Dorsolateral prefrontal cortex (tissue), 120 donors: ENCODE measurements at regions of chr6 and their contacts with region 1.

Region 1: DNA sequence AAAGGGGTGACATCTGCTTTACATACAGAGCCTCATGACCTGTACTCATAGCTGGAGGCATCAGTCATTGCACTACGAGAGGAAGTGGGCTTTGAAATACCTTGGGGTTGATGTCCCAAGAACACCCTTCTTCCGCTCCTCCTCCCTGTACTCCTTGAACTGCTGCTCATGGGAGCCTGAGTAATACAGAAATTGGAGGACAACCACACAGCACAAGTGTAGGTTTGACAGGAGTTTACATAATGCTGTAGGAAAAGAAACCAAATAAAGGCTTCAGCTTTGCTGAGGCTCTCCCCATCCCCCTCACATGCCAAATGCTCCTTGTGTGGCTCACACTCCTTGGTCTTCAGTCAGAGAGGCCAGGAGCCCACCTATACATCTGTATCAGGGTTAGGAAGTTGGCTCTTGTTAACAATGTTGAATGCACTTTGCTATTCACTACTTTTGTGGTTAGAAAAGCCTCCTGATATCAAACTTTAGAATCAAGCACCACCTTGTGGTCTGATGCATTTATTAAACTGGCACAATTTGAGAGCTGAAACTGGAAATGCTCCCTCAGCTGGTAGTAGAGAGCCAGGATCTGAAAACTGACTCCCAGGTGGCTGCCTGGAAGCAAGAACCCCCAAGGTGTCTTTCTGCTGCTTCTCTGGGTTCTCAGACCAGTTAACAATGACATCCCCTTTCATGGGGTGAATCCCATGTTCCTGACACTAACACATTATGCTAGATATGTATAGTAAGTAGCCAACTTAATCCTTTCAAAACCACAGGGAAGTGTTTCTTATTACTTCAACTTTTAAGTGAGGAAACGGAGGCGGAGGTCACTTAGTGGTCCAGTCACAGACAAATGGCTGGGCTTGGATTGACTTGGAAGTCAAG is 56.2 kb upstream of the EDN1 start:
- DNase-seq: peak in 4 of 10 donors; percentile 16 to 51 (median 36)
- H3K4me3 ChIP-seq: peak overlapping the region in 2 of 59 donors; percentile 9 to 17
- H3K27ac ChIP-seq: peak overlapping the region in 36 of 59 donors; percentile 0 to 76 (median 46)
- H3K27me3 ChIP-seq: no peaks in the 10 kb centered on the region
- CTCF ChIP-seq: peak; percentile 77 to 99 (median 92)

Region 2: DNA sequence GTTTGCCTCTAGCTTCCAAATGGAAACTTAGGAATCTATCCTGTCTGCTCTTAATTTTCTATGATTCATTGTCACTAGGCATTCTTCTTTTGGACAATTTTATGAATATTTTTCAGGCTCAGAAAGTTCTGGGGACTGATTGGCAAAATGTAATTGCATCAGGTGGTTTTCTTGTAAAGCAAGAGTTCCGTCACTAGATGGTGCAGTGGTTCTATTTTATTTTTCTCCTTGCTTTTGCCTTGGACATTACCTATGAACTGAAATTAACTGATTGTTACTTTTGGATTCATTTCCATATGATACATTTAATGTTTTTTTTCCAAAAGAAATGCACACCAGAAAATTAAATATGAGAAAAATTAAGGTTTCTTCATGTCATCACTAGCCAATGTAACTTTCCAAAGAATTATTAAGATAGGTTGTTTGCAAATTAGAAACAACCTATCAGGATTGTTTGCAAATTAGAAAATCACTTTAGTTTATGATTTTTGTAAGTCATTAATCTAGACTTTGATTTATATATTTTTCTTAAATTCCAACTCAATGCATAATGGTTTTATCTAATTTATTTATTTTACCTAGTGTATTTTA is 648.4 kb before region 1 on chr6:
- intact Hi-C with region 1: loop called (anchors 5 to 10 kb)
- DNase-seq: no peak
- H3K4me3 ChIP-seq: no peak overlapping the region
- H3K27ac ChIP-seq: no peak overlapping the region
- H3K27me3 ChIP-seq: no peaks in the 10 kb centered on the region
- CTCF ChIP-seq: peak; percentile 49 to 85 (median 68)

Region 3: GRCh38 chr6:11653028-11653583 is 580.8 kb before region 1 on chr6:
- intact Hi-C with region 1: loop called (anchors 1 to 5 kb)
- DNase-seq: peak in 1 of 10 donors; percentile 11
- H3K4me3 ChIP-seq: no peak overlapping the region
- H3K27ac ChIP-seq: peak overlapping the region in 3 of 59 donors; percentile 7 to 31 (median 20)
- H3K27me3 ChIP-seq: no peaks in the 10 kb centered on the region
- CTCF ChIP-seq: no peak

Region 4: DNA sequence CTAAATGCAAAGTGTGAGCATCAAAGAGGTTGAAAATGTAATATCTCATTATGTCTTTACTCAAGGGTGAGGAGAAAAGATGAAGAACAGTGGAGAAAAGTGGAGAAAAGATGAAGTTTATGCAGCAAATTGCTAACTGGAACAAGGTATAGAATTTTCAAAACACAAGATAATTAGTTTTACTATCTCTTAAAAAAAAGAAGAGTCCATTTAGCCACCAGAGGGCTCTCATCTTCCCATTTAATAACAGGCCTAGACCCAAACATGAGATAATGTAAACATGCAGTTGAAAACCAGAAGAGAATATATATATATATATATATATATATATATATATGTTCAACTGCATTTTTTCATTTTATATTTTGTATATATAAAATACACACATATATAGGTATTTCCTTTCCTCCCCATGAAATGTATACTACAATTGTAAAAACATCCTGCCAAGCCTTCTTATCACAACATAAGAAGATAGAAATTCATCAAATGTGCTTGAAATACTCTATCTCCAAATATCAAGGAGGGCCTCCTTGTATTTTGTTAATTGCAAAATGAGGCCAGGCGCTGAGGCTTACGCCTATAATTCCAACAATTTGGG is 533.7 kb before region 1 on chr6:
- intact Hi-C with region 1: loop called in 1 of 2 experiments (anchors 5 kb)
- DNase-seq: no peak
- H3K4me3 ChIP-seq: no peak overlapping the region
- H3K27ac ChIP-seq: no peak overlapping the region
- H3K27me3 ChIP-seq: no peaks in the 10 kb centered on the region
- CTCF ChIP-seq: peak; percentile 24 to 74 (median 54)

Region 5: DNA sequence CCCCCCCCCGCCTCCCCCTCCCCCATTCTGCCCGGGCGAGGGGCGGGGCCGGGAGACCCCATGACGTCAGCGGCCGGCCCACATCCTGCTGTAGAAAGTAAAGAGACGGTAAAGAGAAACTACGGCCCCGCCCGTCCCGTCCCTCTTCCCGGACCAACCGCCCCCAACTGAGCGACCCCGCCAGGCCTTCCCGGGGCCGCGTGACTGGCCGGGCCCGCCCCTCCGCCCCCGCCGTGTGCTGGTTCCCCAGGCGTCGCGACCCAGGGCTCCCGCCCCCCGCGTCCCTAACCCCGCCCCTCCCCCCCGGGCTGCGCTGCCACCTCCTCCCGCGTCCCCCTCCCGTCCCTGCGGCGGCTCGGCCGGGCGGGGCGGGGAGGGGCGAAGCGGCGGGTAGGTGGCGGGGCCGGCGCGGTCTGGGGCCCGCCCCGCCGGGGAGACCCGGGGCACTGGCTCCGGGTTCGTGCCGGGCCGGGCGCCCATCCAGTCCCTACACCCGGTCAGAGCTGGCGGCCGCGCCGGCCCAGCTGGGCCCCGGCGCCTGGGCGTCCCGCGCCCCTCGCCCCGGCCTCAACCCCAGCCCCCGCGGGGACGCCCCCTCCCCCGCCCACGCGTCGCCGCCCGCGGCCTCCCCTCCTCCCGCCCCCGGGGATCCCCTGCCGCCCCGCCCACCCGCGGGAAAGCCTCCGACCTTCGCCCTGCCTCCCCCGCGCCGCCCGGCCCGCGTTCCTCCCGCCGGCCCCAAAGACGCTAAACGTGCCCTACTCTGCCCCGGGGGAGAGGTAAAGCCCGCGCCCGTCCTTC is 222.5 kb before region 1 on chr6:
- intact Hi-C with region 1: loop called in 1 of 2 experiments (anchors 5 kb)
- DNase-seq: peak; percentile 67 to 95 (median 92)
- H3K4me3 ChIP-seq: peak overlapping the region; percentile 47 to 87 (median 75)
- H3K27ac ChIP-seq: peak overlapping the region in 55 of 59 donors; percentile 53 to 95 (median 87)
- H3K27me3 ChIP-seq: no peaks in the 10 kb centered on the region
- CTCF ChIP-seq: peak in 6 of 56 donors; percentile 5 to 32 (median 10)

Region 6: DNA sequence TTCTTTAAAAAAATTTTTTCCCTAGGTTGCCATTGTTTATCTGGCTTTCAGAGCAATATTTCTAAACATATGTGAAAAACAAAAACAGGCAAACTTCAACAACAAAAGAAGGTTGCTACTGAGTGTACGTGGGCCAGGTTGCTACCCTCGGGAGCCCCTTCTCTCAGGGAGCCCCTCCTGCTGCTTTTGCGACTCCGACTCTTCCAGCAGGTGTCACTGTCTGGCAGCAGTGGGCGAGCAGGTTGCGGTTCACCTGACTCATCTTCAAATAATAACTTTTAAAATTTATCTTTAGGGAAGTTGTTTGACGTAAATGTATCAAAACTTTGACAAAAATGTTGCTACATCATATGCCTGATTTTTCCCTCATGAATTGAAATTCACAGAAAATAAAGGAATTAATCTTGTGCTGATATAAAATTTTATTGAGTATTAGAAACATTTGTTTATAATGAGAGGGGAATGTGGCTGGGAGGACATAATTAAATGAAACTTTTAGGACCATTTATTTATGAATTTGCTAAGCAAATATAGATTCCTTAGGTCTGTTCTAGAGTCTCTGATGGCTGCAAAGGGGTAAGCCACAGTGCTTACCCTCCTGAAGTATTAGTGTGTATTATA is 83.0 kb before region 1 on chr6:
- intact Hi-C with region 1: loop called (anchors 2 to 5 kb)
- DNase-seq: peak in 6 of 10 donors; percentile 34 to 62 (median 54)
- H3K4me3 ChIP-seq: peak overlapping the region in 13 of 59 donors; percentile 3 to 40 (median 19)
- H3K27ac ChIP-seq: peak overlapping the region in 56 of 59 donors; percentile 34 to 94 (median 84)
- H3K27me3 ChIP-seq: no peaks in the 10 kb centered on the region
- CTCF ChIP-seq: peak; percentile 14 to 85 (median 66)

Region 7: GRCh38 chr6:13742961-13743735 is 1509.2 kb after region 1 on chr6:
- intact Hi-C with region 1: no loop called
- DNase-seq: no peak
- H3K4me3 ChIP-seq: peak overlapping the region in 1 of 59 donors; percentile 9
- H3K27ac ChIP-seq: no peak overlapping the region
- H3K27me3 ChIP-seq: no peaks in the 10 kb centered on the region
- CTCF ChIP-seq: no peak